ENCODE measurements at regions of chr1 and their contacts with region 1.

Region 1: GRCh38 chr1:85276215-85276977 is at the start of gene BCL10:
- DNase-seq: peak; percentile 98
- H3K4me3 Mint-ChIP-seq: peak within 1 kb of the TSS; percentile 77
- H3K27ac Mint-ChIP-seq: peak within 1 kb of the TSS; percentile 85
- H3K4me1 Mint-ChIP-seq: peaks cover 40% of the 10 kb centered on the region
- H3K27me3 Mint-ChIP-seq: no peaks in the 10 kb centered on the region
- CTCF ChIP-seq: no peak
- total RNA-seq, gene BCL10: 43.9 and 55.8 TPM in 2 replicates

Region 2: GRCh38 chr1:85148524-85149250 is 127.7 kb before region 1 on chr1:
- CTCF ChIA-PET with region 1: no interaction called
- POLR2A ChIA-PET with region 1: no interaction called
- intact Hi-C with region 1: no loop called
- DNase-seq: peak; percentile 2
- H3K4me3 Mint-ChIP-seq: no peak overlapping the region
- H3K27ac Mint-ChIP-seq: no peak overlapping the region
- H3K4me1 Mint-ChIP-seq: no peaks in the 10 kb centered on the region
- H3K27me3 Mint-ChIP-seq: no peaks in the 10 kb centered on the region
- CTCF ChIP-seq: no peak

Region 3: DNA sequence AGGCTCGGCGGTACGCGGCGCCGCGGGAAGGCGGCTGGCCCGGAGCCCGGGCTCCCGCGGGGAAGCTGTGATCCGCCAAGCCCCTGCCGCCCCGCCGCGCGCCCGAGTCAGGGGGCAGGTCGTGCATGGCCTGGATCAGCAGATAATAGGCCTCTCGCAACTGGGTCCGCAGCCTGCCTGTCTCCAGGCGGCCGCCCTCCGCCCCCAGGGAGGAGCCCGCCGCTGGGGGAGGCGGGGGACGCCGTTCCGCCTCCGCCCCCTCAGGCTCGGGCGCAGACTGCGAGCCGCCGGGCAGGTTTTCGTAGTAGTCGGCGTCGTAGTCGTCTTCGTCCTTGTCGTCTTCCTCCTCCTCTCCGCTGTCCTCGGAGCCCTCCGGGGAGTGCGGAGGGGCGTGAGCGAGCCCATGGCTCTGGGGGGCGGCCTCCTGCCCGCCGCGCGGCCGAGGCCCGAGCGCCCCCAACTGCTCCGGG is 75.5 kb before region 1 on chr1 and contains the start of gene SYDE2:
- CTCF ChIA-PET with region 1: no interaction called
- POLR2A ChIA-PET with region 1: interaction called, 17 read pairs
- intact Hi-C with region 1: no loop called
- DNase-seq: peak; percentile 79
- H3K4me3 Mint-ChIP-seq: peak within 1 kb of the TSS; percentile 93
- H3K27ac Mint-ChIP-seq: peak within 1 kb of the TSS; percentile 76
- H3K4me1 Mint-ChIP-seq: peaks cover 14% of the 10 kb centered on the region
- H3K27me3 Mint-ChIP-seq: no peaks in the 10 kb centered on the region
- CTCF ChIP-seq: no peak
- total RNA-seq, gene SYDE2: 4.3 and 5.9 TPM in 2 replicates

Region 4: DNA sequence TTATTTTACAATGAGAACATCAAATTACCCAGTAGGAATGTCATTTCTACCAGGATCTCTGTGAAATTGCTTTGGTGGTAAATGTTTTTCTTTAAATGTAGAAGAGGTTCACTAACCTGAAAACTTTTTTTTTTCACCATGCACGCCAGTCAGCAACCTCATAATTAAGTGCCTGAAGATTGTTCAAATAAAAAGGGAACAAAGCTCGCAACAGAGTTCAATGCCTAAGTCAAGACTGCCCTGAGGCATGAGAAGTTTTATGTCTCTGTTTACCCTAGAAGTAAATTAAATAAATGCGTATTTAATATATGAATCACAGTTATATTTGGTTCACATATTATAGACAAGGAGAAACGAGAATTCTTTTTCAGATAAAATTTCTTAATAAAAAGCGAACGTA is 61.7 kb before region 1 on chr1:
- CTCF ChIA-PET with region 1: no interaction called
- POLR2A ChIA-PET with region 1: no interaction called
- intact Hi-C with region 1: no loop called
- DNase-seq: no peak
- H3K4me3 Mint-ChIP-seq: no peak overlapping the region
- H3K27ac Mint-ChIP-seq: no peak overlapping the region
- H3K4me1 Mint-ChIP-seq: no peaks in the 10 kb centered on the region
- H3K27me3 Mint-ChIP-seq: peaks cover 11% of the 10 kb centered on the region
- CTCF ChIP-seq: no peak

Region 5: DNA sequence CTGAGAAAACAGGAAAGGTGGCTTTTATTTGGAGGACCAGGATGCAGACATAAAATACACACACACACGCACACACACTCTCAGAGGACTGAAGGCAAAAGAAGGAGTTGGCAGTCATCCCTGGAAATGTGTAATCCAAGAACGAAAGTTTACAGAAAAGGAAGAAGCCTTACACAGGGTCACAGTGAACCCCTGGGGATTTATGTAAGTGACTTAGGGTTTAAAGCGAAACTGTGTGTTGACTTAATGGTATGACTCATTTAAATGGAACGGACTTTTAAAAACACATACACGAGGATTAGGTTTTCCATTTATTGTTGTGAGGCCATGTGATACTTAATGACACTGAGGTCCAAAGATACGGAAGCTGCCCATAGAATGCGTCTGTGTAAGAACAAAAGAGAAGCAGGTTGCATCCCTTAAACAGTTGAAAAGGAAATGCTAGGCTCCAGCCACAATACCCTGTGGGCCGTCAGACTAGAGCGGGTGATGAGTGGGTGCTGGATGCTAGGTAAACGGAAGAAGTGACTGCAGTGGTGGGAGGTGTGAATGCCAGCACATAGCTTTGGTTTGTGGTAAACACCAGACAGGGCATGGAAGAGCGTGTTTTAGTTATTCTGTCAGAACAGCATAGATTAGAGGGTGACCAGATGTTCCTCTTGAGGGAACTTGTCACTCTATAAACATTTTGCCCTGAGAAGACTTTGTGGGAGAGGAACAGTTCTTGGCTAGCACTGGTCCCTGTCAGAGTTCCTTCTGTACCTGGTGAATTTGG is 21.6 kb after region 1 on chr1:
- CTCF ChIA-PET with region 1: interaction called, 4 read pairs
- POLR2A ChIA-PET with region 1: interaction called, 271 read pairs
- intact Hi-C with region 1: no loop called
- DNase-seq: peak; percentile 96
- H3K4me3 Mint-ChIP-seq: peak overlapping the region; percentile 52
- H3K27ac Mint-ChIP-seq: peak overlapping the region; percentile 40
- H3K4me1 Mint-ChIP-seq: peaks cover 23% of the 10 kb centered on the region
- H3K27me3 Mint-ChIP-seq: no peaks in the 10 kb centered on the region
- CTCF ChIP-seq: no peak

Region 6: DNA sequence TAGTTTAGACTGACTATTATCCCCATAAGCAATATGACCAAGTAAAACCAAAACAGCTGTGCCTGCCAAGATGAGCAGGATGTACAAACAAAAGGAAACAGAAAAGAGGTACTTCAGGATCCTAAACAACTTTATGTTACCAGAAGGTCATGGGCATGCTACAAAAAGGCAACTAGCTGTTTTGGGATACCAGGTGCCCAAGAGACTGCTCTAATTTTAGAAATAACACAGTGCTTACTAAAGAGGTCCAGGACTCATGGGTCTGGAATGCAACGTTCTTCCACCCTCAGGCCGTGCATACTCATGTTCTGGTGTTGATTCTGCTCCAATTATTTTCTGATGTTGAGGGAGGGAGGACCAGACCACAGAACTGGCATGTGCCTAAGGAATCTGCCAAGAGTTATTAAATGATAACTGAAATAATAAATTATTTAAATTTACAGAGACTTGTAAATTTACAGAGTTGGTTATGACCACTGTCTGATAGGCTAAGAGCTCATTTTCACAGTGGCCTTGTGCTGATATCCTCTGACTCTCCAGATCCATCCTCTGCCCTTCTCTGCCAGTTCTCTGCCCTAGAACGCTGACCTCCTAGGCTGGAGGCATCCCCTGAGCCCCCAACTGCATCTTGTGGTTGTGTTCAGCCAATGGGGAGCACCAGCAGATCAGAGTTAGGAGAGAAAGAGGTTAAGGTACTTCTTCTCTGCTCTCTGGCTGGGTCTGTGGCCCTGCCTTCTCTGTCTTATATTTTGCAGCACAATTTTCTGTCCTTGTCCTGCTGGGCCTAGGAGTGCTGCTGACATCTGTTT is 37.7 kb after region 1 on chr1:
- CTCF ChIA-PET with region 1: interaction called, 4 read pairs
- POLR2A ChIA-PET with region 1: interaction called, 13 read pairs
- intact Hi-C with region 1: no loop called
- DNase-seq: peak; percentile 87
- H3K4me3 Mint-ChIP-seq: no peak overlapping the region
- H3K27ac Mint-ChIP-seq: peak overlapping the region; percentile 87
- H3K4me1 Mint-ChIP-seq: peaks cover 25% of the 10 kb centered on the region
- H3K27me3 Mint-ChIP-seq: no peaks in the 10 kb centered on the region
- CTCF ChIP-seq: no peak

Region 7: DNA sequence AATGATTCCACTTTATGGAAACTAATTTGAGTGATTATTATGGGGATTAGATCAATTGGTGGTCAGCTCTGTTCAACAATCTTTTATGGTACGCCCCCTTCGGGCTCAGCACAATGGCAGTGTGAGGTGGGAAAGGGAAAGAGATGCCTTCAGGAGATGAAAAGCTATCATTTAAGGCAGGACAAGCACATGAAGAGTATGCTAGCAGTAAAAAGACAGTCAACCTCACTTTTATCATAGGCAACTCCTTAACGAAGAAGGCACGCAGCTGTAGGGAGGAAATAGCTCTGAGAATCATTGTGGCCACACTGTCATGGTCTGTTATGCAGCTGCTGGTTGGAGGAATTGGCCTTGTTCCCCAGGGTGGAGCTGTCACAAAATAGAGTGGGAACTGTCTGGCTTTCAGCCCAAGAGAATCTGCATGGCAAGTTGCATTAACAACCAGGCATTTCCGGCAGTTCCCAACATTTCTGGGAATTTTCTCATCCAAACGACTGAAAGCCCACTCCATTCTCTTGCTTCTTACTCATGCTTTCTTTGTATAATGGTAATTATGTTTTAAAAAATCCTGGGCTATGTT is 54.4 kb after region 1 on chr1:
- CTCF ChIA-PET with region 1: interaction called, 3 read pairs
- POLR2A ChIA-PET with region 1: interaction called, 22 read pairs
- intact Hi-C with region 1: no loop called
- DNase-seq: peak; percentile 78
- H3K4me3 Mint-ChIP-seq: peak overlapping the region; percentile 12
- H3K27ac Mint-ChIP-seq: peak overlapping the region; percentile 90
- H3K4me1 Mint-ChIP-seq: peaks cover 36% of the 10 kb centered on the region
- H3K27me3 Mint-ChIP-seq: no peaks in the 10 kb centered on the region
- CTCF ChIP-seq: no peak

Region 8: DNA sequence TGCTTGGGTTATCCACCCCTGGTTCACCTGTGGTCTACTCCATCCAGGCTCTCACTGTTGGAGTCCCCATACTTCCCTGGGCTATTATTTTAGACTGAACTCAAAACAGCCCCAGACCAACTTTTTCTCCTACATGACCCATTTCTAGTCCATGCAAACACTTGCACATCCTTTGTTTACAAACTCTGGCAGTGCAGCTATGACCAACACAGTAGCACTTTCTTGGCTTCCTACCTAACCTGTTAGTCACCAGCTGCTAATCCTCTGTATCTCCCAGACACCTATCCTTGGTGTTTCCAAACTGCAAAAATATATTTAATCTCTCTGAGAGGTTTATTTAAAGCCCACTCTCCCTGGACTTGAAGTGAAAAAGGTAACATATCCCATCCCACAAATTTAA is 97.8 kb after region 1 on chr1:
- CTCF ChIA-PET with region 1: no interaction called
- POLR2A ChIA-PET with region 1: interaction called, 14 read pairs
- intact Hi-C with region 1: no loop called
- DNase-seq: peak; percentile 85
- H3K4me3 Mint-ChIP-seq: no peak overlapping the region
- H3K27ac Mint-ChIP-seq: peak overlapping the region; percentile 65
- H3K4me1 Mint-ChIP-seq: peaks cover 6% of the 10 kb centered on the region
- H3K27me3 Mint-ChIP-seq: no peaks in the 10 kb centered on the region
- CTCF ChIP-seq: no peak

Region 9: DNA sequence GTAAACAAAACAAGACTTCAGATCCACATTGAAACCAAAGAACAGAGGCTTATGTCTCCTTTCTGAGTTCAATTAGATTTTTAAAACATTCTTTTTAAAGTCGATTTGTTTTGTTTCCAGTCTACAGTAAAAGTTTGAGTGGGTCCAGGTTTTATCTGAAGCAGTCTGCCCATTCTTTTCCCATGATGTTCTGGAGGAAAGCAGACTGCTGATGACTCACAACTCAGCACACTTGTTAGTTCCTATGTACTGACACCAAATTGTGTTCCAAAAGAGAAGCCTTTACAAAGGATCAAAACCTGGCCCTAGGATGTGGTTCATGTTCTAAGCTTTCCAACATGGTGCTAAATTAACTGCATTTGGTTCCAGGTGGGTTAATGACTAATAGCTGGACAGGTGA is 292.7 kb after region 1 on chr1:
- CTCF ChIA-PET with region 1: interaction called, 4 read pairs
- POLR2A ChIA-PET with region 1: interaction called, 21 read pairs
- intact Hi-C with region 1: no loop called
- DNase-seq: no peak
- H3K4me3 Mint-ChIP-seq: no peak overlapping the region
- H3K27ac Mint-ChIP-seq: peak overlapping the region; percentile 21
- H3K4me1 Mint-ChIP-seq: peaks cover 49% of the 10 kb centered on the region
- H3K27me3 Mint-ChIP-seq: no peaks in the 10 kb centered on the region
- CTCF ChIP-seq: no peak

Measured in MCF 10A (cell line).